Activated naive CD4-positive, alpha-beta T cell treated with anti-CD3 and anti-CD28 coated beads, Interleukin-2, amount 10 ng/mL, durations not matched to agents 7 days and 5 days (primary cell): ENCODE measurements at regions of chr1 and their contacts with region 1.

Region 1: GRCh38 chr1:27284425-27285273 is 37.3 kb upstream of the TMEM222 start:
- DNase-seq: peak; percentile 93
- H3K4me3 Mint-ChIP-seq: no peak overlapping the region
- H3K27ac Mint-ChIP-seq: no peak overlapping the region
- H3K4me1 Mint-ChIP-seq: no peaks in the 10 kb centered on the region
- H3K27me3 Mint-ChIP-seq: no peaks in the 10 kb centered on the region

Region 2: DNA sequence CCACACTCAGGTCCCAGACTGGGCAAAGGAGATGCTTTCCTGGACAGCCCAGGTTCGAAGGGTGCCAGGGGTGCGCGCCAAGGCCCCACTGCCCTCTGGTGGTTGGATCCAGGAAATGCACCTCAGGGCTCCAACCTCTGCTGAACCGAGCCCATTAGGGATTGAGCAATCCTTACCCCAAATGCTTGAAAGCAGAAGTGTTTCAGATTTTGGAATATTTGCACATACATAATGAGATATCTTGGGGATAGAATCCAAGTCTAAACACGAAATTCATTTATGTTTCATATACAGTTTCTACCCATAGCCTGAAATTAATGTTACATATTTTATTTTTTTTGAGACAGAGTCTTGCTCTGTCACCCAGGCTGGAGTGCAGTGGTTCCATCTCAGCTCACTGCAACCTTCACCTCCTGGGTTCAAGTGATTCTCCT is 187.1 kb before region 1 on chr1:
- CTCF ChIA-PET with region 1: interaction called, 88 read pairs
- DNase-seq: peak; percentile 82
- H3K4me3 Mint-ChIP-seq: no peak overlapping the region
- H3K27ac Mint-ChIP-seq: peak overlapping the region; percentile 6
- H3K4me1 Mint-ChIP-seq: peaks cover 5% of the 10 kb centered on the region
- H3K27me3 Mint-ChIP-seq: peaks cover 4% of the 10 kb centered on the region

Region 3: DNA sequence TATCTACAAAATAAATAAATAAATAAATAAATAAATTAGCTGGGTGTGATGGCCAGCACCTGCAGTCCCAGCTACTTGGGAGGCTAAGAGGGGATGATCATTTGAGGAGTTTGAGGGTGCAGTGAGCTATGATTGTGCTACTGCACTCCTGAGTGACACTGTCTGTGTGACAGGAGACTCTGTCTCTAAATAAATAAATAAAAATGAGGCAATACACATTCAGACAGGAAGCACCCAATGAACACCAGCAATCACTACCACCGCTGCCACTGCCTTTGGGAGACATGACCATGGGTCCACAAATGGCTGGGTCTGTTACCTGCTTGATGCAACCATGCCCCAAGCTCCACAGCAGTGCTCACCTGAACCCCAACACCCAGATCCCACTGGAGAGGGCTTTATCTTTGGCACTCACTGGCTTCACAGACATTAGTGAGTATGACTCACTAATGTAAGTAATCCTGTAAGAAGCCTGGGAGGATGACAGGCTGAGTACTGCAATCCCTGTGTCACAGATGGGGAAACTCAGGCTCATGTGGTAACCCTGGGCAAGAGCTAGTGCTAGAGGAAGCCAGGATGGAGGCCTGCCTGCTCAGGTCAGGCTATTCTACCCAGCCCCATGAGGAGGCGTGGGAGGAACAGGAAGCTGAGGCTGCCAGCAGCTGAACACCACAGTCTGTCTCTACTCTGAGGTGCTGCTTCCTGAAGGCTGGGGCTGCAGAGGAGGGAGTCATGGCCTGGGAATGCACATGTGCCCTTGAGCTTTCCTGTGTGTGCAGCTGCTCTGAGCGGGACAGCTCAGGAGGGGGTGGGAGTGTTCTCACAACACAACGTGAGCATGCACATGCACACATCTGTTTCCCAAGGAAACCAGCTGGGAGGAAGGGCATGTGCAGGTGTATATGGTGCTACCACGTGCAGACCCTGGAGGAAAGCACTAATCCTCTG is 172.7 kb before region 1 on chr1:
- CTCF ChIA-PET with region 1: interaction called, 26 read pairs
- DNase-seq: peak; percentile 82
- H3K4me3 Mint-ChIP-seq: no peak overlapping the region
- H3K27ac Mint-ChIP-seq: peak overlapping the region; percentile 92
- H3K4me1 Mint-ChIP-seq: peaks cover 60% of the 10 kb centered on the region
- H3K27me3 Mint-ChIP-seq: no peaks in the 10 kb centered on the region

Region 4: GRCh38 chr1:27192039-27192529 is 92.6 kb before region 1 on chr1:
- CTCF ChIA-PET with region 1: interaction called, 47 read pairs
- DNase-seq: no peak
- H3K4me3 Mint-ChIP-seq: no peak overlapping the region
- H3K27ac Mint-ChIP-seq: no peak overlapping the region
- H3K4me1 Mint-ChIP-seq: no peaks in the 10 kb centered on the region
- H3K27me3 Mint-ChIP-seq: peaks cover 21% of the 10 kb centered on the region

Region 5: DNA sequence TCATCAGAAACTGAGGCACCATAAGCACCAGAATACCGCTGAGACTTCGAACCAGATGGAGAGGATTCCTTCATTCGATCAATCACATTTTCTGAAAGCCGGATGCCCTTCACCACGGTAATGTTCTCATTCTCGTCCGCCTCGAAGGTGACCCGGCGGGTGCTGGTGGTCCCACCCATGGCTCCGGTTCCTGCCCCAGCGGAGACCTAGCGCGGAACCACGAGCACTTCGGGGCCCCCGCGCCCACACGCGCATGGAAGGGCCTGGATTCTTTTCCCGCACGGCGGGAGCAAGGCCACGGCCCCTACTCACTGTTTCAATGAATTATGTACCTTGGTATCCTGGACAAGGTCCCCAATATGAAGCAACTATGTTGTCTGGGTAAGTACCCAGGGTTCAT is 83.4 kb before region 1 on chr1:
- CTCF ChIA-PET with region 1: interaction called, 47 read pairs
- DNase-seq: no peak
- H3K4me3 Mint-ChIP-seq: no peak overlapping the region
- H3K27ac Mint-ChIP-seq: no peak overlapping the region
- H3K4me1 Mint-ChIP-seq: peaks cover 3% of the 10 kb centered on the region
- H3K27me3 Mint-ChIP-seq: peaks cover 15% of the 10 kb centered on the region

Region 6: DNA sequence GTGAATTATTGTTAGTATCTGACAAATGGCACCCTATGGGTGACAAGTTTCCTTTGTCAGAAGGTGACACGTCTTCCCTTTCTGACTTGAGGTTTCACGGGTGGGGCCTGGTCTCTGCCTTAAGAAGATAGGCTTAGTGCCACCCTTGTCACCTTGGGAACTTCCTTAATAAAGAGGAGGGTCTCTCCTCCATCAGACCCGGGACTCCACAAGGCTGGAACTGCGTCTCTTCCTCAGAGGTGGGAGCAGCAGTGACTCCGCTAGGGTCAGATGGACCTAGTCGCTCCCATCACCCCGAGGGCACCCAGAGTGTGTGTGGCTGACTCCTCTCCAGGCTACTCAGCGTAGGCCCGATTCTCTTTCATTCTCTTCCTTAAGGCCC is 51.0 kb before region 1 on chr1:
- CTCF ChIA-PET with region 1: no interaction called
- DNase-seq: peak; percentile 42
- H3K4me3 Mint-ChIP-seq: peak overlapping the region; percentile 98
- H3K27ac Mint-ChIP-seq: peak overlapping the region; percentile 86
- H3K4me1 Mint-ChIP-seq: peaks cover 33% of the 10 kb centered on the region
- H3K27me3 Mint-ChIP-seq: peaks cover 6% of the 10 kb centered on the region

Region 7: DNA sequence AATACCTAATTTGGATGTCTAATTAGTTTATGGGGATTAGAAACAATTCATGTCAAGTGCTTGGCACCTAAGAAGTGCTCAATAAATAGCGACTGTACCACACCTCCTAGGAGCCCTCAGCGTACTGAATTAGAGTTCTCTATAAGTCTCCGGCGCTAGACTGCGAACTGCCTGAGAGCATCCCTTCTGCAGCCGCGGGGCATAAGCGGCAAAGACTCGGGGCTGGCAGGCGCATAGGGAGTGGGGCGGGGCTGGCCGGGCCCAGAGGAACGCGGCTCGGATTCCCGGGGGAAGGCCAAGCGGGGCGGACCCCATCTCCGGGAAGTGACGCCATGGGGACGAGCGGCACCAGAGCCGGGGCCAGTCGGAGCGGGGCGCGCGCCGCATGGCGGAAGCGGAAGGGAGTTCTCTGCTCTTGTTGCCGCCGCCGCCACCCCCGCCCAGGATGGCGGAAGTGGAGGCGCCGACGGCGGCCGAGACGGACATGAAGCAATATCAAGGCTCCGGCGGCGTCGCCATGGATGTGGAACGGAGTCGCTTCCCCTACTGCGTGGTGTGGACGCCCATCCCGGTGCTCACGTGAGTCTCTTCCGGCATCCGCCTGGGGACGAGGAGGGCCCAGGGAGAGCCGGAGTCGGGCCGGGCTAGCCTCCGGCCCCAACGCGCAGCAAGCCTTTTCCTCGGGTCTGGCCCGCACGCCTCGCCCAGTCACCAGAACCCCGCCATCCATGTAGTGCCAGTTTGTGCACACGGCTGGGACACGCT is 37.3 kb after region 1 on chr1 and contains the start of gene TMEM222:
- CTCF ChIA-PET with region 1: no interaction called
- DNase-seq: peak; percentile 98
- H3K4me3 Mint-ChIP-seq: peak within 1 kb of the TSS; percentile 96
- H3K27ac Mint-ChIP-seq: peak within 1 kb of the TSS; percentile 92
- H3K4me1 Mint-ChIP-seq: peaks cover 41% of the 10 kb centered on the region
- H3K27me3 Mint-ChIP-seq: peaks cover 13% of the 10 kb centered on the region